ENCODE measurements at regions of chr12 and their contacts with region 1.

Region 1: GRCh38 chr12:102879144-102879763 is 37.8 kb downstream of the PAH start:
- DNase-seq: peak; percentile 86
- H3K4me3 Mint-ChIP-seq: no peak overlapping the region
- H3K27ac Mint-ChIP-seq: no peak overlapping the region
- H3K4me1 Mint-ChIP-seq: peaks cover 6% of the 10 kb centered on the region
- H3K27me3 Mint-ChIP-seq: peaks cover 33% of the 10 kb centered on the region
- CTCF ChIP-seq: peak; percentile 65

Region 2: GRCh38 chr12:101414533-101415119 is 1464.6 kb before region 1 on chr12:
- CTCF ChIA-PET with region 1: no interaction called
- POLR2A ChIA-PET with region 1: no interaction called
- intact Hi-C with region 1: loop called (anchors 10 kb)
- DNase-seq: peak; percentile 77
- H3K4me3 Mint-ChIP-seq: no peak overlapping the region
- H3K27ac Mint-ChIP-seq: no peak overlapping the region
- H3K4me1 Mint-ChIP-seq: no peaks in the 10 kb centered on the region
- H3K27me3 Mint-ChIP-seq: no peaks in the 10 kb centered on the region
- CTCF ChIP-seq: peak; percentile 46

Region 3: GRCh38 chr12:101939856-101940265 is 939.4 kb before region 1 on chr12:
- CTCF ChIA-PET with region 1: interaction called, 9 read pairs
- POLR2A ChIA-PET with region 1: no interaction called
- intact Hi-C with region 1: loop called (anchors 1 kb)
- DNase-seq: peak; percentile 81
- H3K4me3 Mint-ChIP-seq: no peak overlapping the region
- H3K27ac Mint-ChIP-seq: no peak overlapping the region
- H3K4me1 Mint-ChIP-seq: peaks cover 23% of the 10 kb centered on the region
- H3K27me3 Mint-ChIP-seq: no peaks in the 10 kb centered on the region
- CTCF ChIP-seq: peak; percentile 77

Region 4: GRCh38 chr12:102444707-102445106 is 434.5 kb before region 1 on chr12:
- CTCF ChIA-PET with region 1: no interaction called
- POLR2A ChIA-PET with region 1: no interaction called
- intact Hi-C with region 1: no loop called
- DNase-seq: no peak
- H3K4me3 Mint-ChIP-seq: no peak overlapping the region
- H3K27ac Mint-ChIP-seq: no peak overlapping the region
- H3K4me1 Mint-ChIP-seq: no peaks in the 10 kb centered on the region
- H3K27me3 Mint-ChIP-seq: no peaks in the 10 kb centered on the region
- CTCF ChIP-seq: no peak

Region 5: DNA sequence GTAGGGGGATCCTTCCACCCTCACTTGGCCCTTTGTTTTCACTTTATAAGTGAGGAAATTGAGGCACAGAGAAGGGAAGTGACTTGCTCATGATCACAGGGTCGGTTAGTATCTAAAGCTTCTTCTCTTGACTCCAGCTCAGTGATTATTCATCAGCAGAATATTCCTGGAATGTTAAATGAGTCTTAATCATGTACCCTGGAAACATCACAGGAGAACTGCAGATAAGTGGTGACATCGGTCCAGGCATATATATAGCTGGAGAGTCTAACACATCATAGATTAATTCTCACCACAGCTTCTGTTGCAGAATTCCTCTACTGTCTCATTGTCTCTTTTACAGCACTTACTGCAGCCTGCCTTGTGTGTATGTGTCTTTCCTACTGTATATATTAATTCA is 32.1 kb before region 1 on chr12:
- CTCF ChIA-PET with region 1: interaction called, 10 read pairs
- POLR2A ChIA-PET with region 1: no interaction called
- intact Hi-C with region 1: no loop called
- DNase-seq: no peak
- H3K4me3 Mint-ChIP-seq: no peak overlapping the region
- H3K27ac Mint-ChIP-seq: no peak overlapping the region
- H3K4me1 Mint-ChIP-seq: no peaks in the 10 kb centered on the region
- H3K27me3 Mint-ChIP-seq: peaks cover 10% of the 10 kb centered on the region
- CTCF ChIP-seq: no peak

Region 6: GRCh38 chr12:102948941-102949352 is 69.7 kb after region 1 on chr12:
- CTCF ChIA-PET with region 1: interaction called, 14 read pairs
- POLR2A ChIA-PET with region 1: no interaction called
- intact Hi-C with region 1: no loop called
- DNase-seq: peak; percentile 42
- H3K4me3 Mint-ChIP-seq: no peak overlapping the region
- H3K27ac Mint-ChIP-seq: no peak overlapping the region
- H3K4me1 Mint-ChIP-seq: no peaks in the 10 kb centered on the region
- H3K27me3 Mint-ChIP-seq: peaks cover 20% of the 10 kb centered on the region
- CTCF ChIP-seq: peak; percentile 93

Region 7: GRCh38 chr12:103020839-103021238 is 141.6 kb after region 1 on chr12:
- CTCF ChIA-PET with region 1: no interaction called
- POLR2A ChIA-PET with region 1: no interaction called
- intact Hi-C with region 1: no loop called
- DNase-seq: no peak
- H3K4me3 Mint-ChIP-seq: no peak overlapping the region
- H3K27ac Mint-ChIP-seq: no peak overlapping the region
- H3K4me1 Mint-ChIP-seq: no peaks in the 10 kb centered on the region
- H3K27me3 Mint-ChIP-seq: no peaks in the 10 kb centered on the region
- CTCF ChIP-seq: no peak

Region 8: GRCh38 chr12:103548622-103549601 is 669.7 kb after region 1 on chr12:
- CTCF ChIA-PET with region 1: interaction called, 169 read pairs
- POLR2A ChIA-PET with region 1: no interaction called
- intact Hi-C with region 1: loop called (anchors 1 kb)
- DNase-seq: peak; percentile 82
- H3K4me3 Mint-ChIP-seq: no peak overlapping the region
- H3K27ac Mint-ChIP-seq: no peak overlapping the region
- H3K4me1 Mint-ChIP-seq: no peaks in the 10 kb centered on the region
- H3K27me3 Mint-ChIP-seq: no peaks in the 10 kb centered on the region
- CTCF ChIP-seq: peak; percentile 93